ENCODE measurements at regions of chr15 and their contacts with region 1.

Region 1: DNA sequence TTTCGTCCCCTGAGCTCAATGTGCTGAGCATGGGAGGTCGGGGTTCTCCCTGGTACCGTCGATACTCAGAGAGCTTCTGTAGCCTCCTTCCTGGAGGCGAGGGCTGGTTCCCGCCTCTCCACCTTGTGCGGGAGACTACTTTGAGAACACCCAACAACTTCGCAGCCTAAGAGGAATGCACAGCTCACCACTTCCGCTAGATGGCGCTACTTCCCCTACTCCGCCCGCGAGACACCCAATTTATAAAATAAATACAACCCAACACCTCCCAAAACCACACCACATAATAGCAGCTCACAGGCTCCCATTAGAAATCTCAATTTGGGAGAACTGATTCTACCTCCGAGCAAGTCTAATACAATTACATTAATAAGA is 1.2 kb downstream of the RGMA start:
- DNase-seq: peak; percentile 42 to 81 (median 64)
- H3K4me3 ChIP-seq: peak overlapping the region; percentile 21
- H3K4me3 Mint-ChIP-seq: peak overlapping the region; percentile 76 to 89 (median 85)
- H3K27ac ChIP-seq: no peak overlapping the region
- H3K27ac Mint-ChIP-seq: peak overlapping the region in 2 of 8 donors; percentile 25 to 40
- H3K4me1 ChIP-seq: peaks cover 10% of the 10 kb centered on the region
- H3K4me1 Mint-ChIP-seq: peaks cover 16 to 22% (median 19%) of the 10 kb centered on the region in 3 donors
- H3K27me3 ChIP-seq: peaks cover 26% of the 10 kb centered on the region
- H3K27me3 Mint-ChIP-seq: peaks cover 50 to 77% of the 10 kb centered on the region in 2 donors

Region 2: GRCh38 chr15:93035953-93036800 is 51.6 kb before region 1 on chr15:
- CTCF ChIA-PET with region 1: interaction called, 10 read pairs
- POLR2A ChIA-PET with region 1: no interaction called
- DNase-seq: peak; percentile 21 to 70 (median 27)
- H3K4me3 ChIP-seq: peak overlapping the region; percentile 7
- H3K4me3 Mint-ChIP-seq: peak overlapping the region in 6 of 7 donors; percentile 33 to 87 (median 76)
- H3K27ac ChIP-seq: no peak overlapping the region
- H3K27ac Mint-ChIP-seq: peak overlapping the region in 5 of 8 donors; percentile 57 to 92 (median 70)
- H3K4me1 ChIP-seq: peaks cover 10% of the 10 kb centered on the region
- H3K4me1 Mint-ChIP-seq: peaks cover 8 to 13% (median 8%) of the 10 kb centered on the region in 3 donors
- H3K27me3 ChIP-seq: no peaks in the 10 kb centered on the region
- H3K27me3 Mint-ChIP-seq: peaks cover 2 to 3% of the 10 kb centered on the region in 2 donors

Region 3: GRCh38 chr15:93076875-93077274 is 10.9 kb before region 1 on chr15:
- CTCF ChIA-PET with region 1: interaction called, 12 read pairs
- POLR2A ChIA-PET with region 1: no interaction called
- DNase-seq: no peak
- H3K4me3 ChIP-seq: no peak overlapping the region
- H3K4me3 Mint-ChIP-seq: no peak overlapping the region
- H3K27ac ChIP-seq: no peak overlapping the region
- H3K27ac Mint-ChIP-seq: no peak overlapping the region
- H3K4me1 ChIP-seq: peaks cover 7% of the 10 kb centered on the region
- H3K4me1 Mint-ChIP-seq: peaks cover 13 to 22% (median 20%) of the 10 kb centered on the region in 3 donors
- H3K27me3 ChIP-seq: peaks cover 11% of the 10 kb centered on the region
- H3K27me3 Mint-ChIP-seq: peaks cover 46 to 87% of the 10 kb centered on the region in 2 donors

Region 4: DNA sequence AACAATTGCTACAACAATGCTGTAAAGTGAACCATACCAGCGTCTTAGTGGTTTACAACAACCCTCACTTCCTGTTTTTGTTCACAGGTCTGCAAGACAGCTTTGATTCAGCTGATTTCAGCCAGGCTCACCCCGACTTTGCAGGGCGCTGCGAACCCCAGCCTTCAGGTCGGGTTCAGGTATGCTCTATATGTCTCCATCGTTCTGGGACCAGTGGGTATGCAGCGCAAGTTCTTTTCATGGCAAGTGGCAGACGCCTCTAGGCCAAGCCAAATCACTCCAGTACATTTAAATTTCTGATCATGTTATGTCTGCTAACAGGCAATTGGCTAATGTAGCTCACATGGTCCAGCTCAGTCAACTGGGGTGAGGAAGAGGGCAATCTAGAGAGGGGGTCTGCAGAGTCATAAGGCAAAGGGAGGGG is 53.6 kb after region 1 on chr15:
- CTCF ChIA-PET with region 1: interaction called, 13 read pairs
- POLR2A ChIA-PET with region 1: no interaction called
- DNase-seq: peak; percentile 6 to 70 (median 30)
- H3K4me3 ChIP-seq: peak overlapping the region; percentile 4
- H3K4me3 Mint-ChIP-seq: peak overlapping the region in 6 of 7 donors; percentile 75 to 82 (median 78)
- H3K27ac ChIP-seq: no peak overlapping the region
- H3K27ac Mint-ChIP-seq: peak overlapping the region; percentile 18 to 87 (median 62)
- H3K4me1 ChIP-seq: peaks cover 17% of the 10 kb centered on the region
- H3K4me1 Mint-ChIP-seq: peaks cover 46 to 73% (median 58%) of the 10 kb centered on the region in 3 donors
- H3K27me3 ChIP-seq: no peaks in the 10 kb centered on the region
- H3K27me3 Mint-ChIP-seq: peaks cover 0 to 10% of the 10 kb centered on the region in 2 donors

Region 5: GRCh38 chr15:93223803-93224202 is 136.0 kb after region 1 on chr15:
- CTCF ChIA-PET with region 1: no interaction called
- POLR2A ChIA-PET with region 1: no interaction called
- DNase-seq: no peak
- H3K4me3 ChIP-seq: no peak overlapping the region
- H3K4me3 Mint-ChIP-seq: no peak overlapping the region
- H3K27ac ChIP-seq: no peak overlapping the region
- H3K27ac Mint-ChIP-seq: no peak overlapping the region
- H3K4me1 ChIP-seq: no peaks in the 10 kb centered on the region
- H3K4me1 Mint-ChIP-seq: peaks cover 0 to 6% (median 4%) of the 10 kb centered on the region in 3 donors
- H3K27me3 ChIP-seq: peaks cover 4% of the 10 kb centered on the region
- H3K27me3 Mint-ChIP-seq: peaks cover 9 to 36% of the 10 kb centered on the region in 2 donors

Region 6: GRCh38 chr15:93333796-93334195 is 246.0 kb after region 1 on chr15:
- CTCF ChIA-PET with region 1: interaction called, 19 read pairs
- POLR2A ChIA-PET with region 1: no interaction called
- DNase-seq: no peak
- H3K4me3 ChIP-seq: no peak overlapping the region
- H3K4me3 Mint-ChIP-seq: no peak overlapping the region
- H3K27ac ChIP-seq: no peak overlapping the region
- H3K27ac Mint-ChIP-seq: no peak overlapping the region
- H3K4me1 ChIP-seq: no peaks in the 10 kb centered on the region
- H3K4me1 Mint-ChIP-seq: peaks cover 1 to 11% (median 4%) of the 10 kb centered on the region in 3 donors
- H3K27me3 ChIP-seq: peaks cover 3% of the 10 kb centered on the region
- H3K27me3 Mint-ChIP-seq: peaks cover 31 to 73% of the 10 kb centered on the region in 2 donors

Region 7: DNA sequence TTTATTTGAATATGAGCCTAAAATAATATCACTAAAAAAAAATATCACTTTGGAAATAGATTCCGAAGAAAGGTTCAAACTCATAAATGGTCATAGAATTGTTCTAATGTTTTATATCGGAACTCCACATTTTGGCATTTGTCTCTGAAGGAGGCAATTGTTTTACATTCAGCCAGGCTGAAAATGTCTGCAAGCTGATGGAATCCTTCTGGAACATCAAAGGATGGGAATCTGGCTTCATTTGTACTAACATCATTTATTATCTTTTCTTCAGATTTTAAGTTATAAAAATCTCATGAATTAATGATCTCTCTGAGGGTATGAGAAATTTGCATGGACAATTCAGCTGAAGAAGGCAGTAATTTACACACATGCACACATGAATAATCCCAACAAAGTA is 252.6 kb after region 1 on chr15:
- CTCF ChIA-PET with region 1: interaction called, 19 read pairs
- POLR2A ChIA-PET with region 1: no interaction called
- DNase-seq: no peak
- H3K4me3 ChIP-seq: no peak overlapping the region
- H3K4me3 Mint-ChIP-seq: no peak overlapping the region
- H3K27ac ChIP-seq: no peak overlapping the region
- H3K27ac Mint-ChIP-seq: no peak overlapping the region
- H3K4me1 ChIP-seq: no peaks in the 10 kb centered on the region
- H3K4me1 Mint-ChIP-seq: no peaks in the 10 kb centered on the region
- H3K27me3 ChIP-seq: peaks cover 2% of the 10 kb centered on the region
- H3K27me3 Mint-ChIP-seq: peaks cover 8 to 49% of the 10 kb centered on the region in 2 donors

Region 8: DNA sequence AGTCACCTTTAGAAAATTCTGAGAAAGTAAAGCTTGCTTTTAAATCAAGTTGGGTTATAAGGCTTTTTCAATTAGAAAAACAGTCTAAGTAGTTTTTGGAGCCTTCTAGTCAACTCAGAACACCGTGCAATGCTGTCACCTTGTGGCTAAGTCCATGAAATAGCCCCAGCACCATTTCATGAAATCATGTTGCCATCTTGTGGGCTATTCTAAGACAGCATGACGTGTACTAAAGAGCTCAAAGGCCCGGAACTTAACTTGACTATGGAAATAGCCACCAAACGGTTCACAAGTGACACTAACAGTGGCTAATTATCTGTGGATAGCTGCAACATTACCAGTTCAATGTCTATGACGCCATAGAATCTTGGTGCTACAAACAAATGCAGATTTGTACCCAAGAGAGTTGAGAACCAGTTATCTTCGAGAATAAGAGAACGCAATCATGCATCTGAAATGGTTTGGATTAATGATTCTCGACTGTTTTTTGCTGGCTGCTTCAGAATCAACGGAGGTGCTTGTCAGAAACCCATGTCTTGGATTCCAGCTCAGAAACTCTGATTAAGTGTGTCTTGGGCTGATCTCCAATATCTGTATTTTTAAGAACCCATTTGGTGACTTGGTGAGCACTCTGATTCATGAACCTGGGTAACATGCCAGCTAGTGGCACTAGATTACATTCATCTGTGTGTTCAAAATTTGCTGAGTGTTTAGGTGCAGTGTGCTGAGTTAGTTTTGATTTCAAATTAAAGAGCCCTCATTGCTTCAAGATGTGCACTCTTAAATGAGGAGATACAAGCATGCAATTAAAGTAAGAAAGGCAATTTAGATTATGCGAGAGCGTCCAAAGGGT is 1032.3 kb after region 1 on chr15:
- CTCF ChIA-PET with region 1: interaction called, 12 read pairs
- POLR2A ChIA-PET with region 1: interaction called, 3 read pairs
- DNase-seq: peak; percentile 9 to 69 (median 30)
- H3K4me3 ChIP-seq: no peak overlapping the region
- H3K4me3 Mint-ChIP-seq: no peak overlapping the region
- H3K27ac ChIP-seq: no peak overlapping the region
- H3K27ac Mint-ChIP-seq: peak overlapping the region in 1 of 8 donors; percentile 15
- H3K4me1 ChIP-seq: no peaks in the 10 kb centered on the region
- H3K4me1 Mint-ChIP-seq: no peaks in the 10 kb centered on the region
- H3K27me3 ChIP-seq: no peaks in the 10 kb centered on the region
- H3K27me3 Mint-ChIP-seq: peaks cover 0 to 2% of the 10 kb centered on the region in 2 donors

Measured in CD8-positive, alpha-beta memory T cell (primary cell).